ENCODE measurements at regions of chr5 and their contacts with region 1.

Region 1: DNA sequence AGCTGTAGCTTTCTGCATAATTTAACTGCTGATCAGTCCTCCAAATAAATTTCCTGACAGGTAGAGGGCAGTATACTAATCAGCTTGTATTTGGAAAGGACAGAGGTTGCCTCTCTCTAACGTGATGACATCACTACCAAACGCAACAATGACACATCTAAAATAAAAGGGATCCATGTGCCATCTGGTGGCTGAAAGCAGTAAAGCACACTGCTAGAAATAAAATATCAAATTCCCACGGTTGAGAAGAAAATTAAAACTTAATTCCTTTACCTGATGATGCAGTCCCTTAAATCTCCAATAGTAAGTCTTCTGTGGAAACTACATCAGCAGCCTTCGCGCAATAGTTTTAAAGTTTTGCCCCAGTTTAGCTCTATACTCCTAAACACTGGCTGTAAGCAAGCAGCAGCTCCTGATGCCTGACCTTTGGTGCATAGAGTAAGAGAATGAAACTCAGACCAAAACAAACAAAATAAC is 54.5 kb downstream of the DIAPH1 start:
- DNase-seq: peak; percentile 48
- ATAC-seq: peak; percentile 56
- H3K4me3 Mint-ChIP-seq: no peak overlapping the region
- H3K27ac Mint-ChIP-seq: peak overlapping the region; percentile 94
- H3K4me1 Mint-ChIP-seq: peaks cover 35% of the 10 kb centered on the region
- H3K27me3 Mint-ChIP-seq: no peaks in the 10 kb centered on the region
- CTCF ChIP-seq: peak; percentile 94

Region 2: GRCh38 chr5:140966293-140967225 is 597.7 kb before region 1 on chr5 and contains the start of gene PCDHAC2:
- CTCF ChIA-PET with region 1: no interaction called
- POLR2A ChIA-PET with region 1: no interaction called
- DNase-seq: peak; percentile 78
- ATAC-seq: peak; percentile 77
- H3K4me3 Mint-ChIP-seq: peak within 1 kb of the TSS; percentile 92
- H3K27ac Mint-ChIP-seq: peak within 1 kb of the TSS; percentile 51; the same call in 1 of the 2 replicates
- H3K4me1 Mint-ChIP-seq: peaks cover 50% of the 10 kb centered on the region
- H3K27me3 Mint-ChIP-seq: peaks cover 21% of the 10 kb centered on the region
- CTCF ChIP-seq: no peak
- total RNA-seq, gene PCDHAC2: 6.7 to 11.3 TPM (median 7.9 TPM) in 3 replicates

Region 3: DNA sequence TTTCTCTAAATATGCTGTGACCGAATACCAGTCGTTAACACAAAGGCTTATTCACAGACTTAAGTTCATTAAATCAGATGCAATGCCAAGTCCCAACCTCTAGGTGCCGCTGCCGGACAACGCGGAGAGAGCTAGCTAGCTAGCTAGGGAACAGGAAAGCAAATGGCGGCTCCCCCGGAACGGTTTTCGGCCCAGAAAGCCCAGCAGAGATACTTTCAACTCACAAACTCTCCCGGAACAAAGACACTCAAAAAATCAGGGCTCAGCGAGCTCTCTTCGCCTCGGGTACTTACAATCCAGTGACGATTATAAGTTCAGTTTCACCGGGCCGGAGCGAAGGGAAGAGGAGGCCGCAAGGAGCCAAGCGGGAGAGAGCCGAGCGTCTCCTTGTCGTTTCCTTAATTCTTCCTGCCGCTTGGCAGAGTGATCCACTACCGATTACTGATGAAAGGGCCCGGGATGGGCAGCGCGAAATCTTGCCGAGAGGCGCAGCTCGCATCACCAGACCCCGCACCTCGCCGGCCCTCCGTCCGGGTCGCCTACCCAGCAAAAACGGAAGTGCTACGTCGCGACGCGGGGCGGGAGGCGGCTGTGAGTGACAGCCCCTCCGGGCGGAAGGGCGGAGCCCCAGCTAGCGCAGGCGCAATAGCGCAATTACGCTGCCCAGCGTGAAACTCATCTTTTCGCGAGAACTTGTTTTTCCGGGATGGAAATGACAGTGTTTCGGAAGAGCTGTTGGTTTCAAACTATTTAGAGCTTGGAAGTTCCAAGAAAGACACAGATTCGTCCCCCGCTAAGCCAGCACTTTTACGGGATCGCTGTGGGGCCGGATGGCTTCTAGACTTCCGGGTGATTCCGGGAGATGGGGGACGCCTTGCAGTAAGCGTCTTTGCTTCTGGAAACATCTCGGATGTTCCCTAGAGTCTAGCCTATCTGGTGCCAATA is 243.8 kb before region 1 on chr5 and contains the start of gene TAF7:
- CTCF ChIA-PET with region 1: interaction called, 15 read pairs
- POLR2A ChIA-PET with region 1: no interaction called
- DNase-seq: peak; percentile 95
- ATAC-seq: peak; percentile 94
- H3K4me3 Mint-ChIP-seq: peak within 1 kb of the TSS; percentile 99
- H3K27ac Mint-ChIP-seq: peak within 1 kb of the TSS; percentile 99
- H3K4me1 Mint-ChIP-seq: peaks cover 24% of the 10 kb centered on the region
- H3K27me3 Mint-ChIP-seq: peaks cover 24% of the 10 kb centered on the region
- CTCF ChIP-seq: peak; percentile 85
- total RNA-seq, gene TAF7: 87.8 to 96.2 TPM (median 90.1 TPM) in 3 replicates

Region 4: DNA sequence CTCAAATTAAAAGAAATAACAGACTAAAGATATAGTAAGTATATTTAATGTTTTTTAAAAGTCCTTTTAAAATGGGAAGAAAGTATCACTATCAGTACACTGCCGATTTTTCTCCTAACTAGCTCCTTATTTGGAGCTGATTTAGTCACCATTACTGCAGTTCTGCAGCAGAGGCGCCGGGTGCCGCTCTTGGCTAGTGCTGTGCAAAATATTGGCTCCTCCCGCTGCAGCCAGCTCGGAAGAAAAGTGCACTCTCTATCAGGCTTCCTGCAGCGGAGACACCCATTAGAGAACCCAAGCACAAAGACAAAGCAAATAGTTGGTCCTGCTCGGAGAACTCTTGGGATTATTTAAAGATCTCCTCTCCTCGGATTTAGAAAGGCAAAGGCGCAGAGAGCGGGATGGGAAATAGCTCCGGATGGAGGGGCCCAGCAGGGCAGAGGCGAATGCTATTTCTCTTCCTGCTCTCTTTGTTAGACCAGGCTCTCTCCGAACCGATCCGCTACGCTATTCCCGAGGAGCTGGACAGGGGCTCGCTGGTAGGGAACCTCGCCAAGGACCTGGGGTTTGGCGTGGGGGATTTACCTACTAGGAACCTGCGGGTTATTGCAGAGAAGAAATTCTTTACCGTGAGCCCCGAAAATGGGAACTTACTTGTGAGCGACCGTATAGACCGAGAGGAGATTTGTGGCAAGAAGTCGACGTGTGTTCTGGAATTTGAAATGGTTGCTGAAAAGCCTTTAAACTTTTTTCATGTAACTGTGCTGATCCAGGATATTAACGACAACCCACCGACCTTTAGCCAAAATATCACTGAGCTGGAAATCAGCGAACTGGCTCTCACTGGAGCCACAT is 194.0 kb before region 1 on chr5 and contains the start of gene PCDHGB3:
- CTCF ChIA-PET with region 1: interaction called, 23 read pairs
- POLR2A ChIA-PET with region 1: no interaction called
- DNase-seq: peak; percentile 56
- ATAC-seq: peak; percentile 95
- H3K4me3 Mint-ChIP-seq: peak within 1 kb of the TSS; percentile 61
- H3K27ac Mint-ChIP-seq: peak within 1 kb of the TSS; percentile 91
- H3K4me1 Mint-ChIP-seq: peaks cover 5% of the 10 kb centered on the region
- H3K27me3 Mint-ChIP-seq: peaks cover 8% of the 10 kb centered on the region
- CTCF ChIP-seq: no peak
- total RNA-seq, gene PCDHGB3: 3.3 to 4.2 TPM (median 3.5 TPM) in 3 replicates

Region 5: DNA sequence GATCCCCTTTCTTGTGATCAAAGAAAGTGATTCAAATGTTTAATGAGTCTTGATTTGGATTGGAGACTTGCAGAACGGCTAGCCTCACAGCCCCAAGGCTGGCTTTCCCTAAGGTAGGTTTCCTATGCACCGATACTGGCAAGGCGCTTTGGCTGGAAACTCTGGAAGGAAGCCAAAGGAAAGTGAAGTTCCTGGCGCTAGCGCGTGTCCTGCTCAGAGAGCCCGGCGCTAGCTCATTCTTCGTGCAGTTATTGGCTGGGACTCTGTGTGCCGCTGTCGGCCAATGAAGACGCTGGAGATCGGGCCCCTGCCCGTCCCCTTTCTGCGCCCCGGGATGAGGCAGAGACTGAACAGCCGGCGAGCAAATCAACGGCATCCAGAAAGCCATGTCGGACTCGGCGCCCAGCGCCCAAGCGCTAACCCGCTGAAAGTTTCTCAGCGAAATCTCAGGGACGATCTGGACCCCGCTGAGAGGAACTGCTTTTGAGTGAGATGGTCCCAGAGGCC is 88.6 kb before region 1 on chr5 and contains the start of gene PCDHGC3:
- CTCF ChIA-PET with region 1: interaction called, 19 read pairs
- POLR2A ChIA-PET with region 1: no interaction called
- DNase-seq: peak; percentile 92
- ATAC-seq: peak; percentile 96
- H3K4me3 Mint-ChIP-seq: peak within 1 kb of the TSS; percentile 92
- H3K27ac Mint-ChIP-seq: peak within 1 kb of the TSS; percentile 93
- H3K4me1 Mint-ChIP-seq: peaks cover 35% of the 10 kb centered on the region
- H3K27me3 Mint-ChIP-seq: peaks cover 28% of the 10 kb centered on the region
- CTCF ChIP-seq: no peak
- total RNA-seq, gene PCDHGC3: 28.1 to 29.4 TPM (median 29.1 TPM) in 3 replicates

Region 6: GRCh38 chr5:141524604-141525597 is 39.4 kb before region 1 on chr5:
- CTCF ChIA-PET with region 1: interaction called, 31 read pairs
- POLR2A ChIA-PET with region 1: no interaction called
- DNase-seq: peak; percentile 93
- ATAC-seq: peak; percentile 98
- H3K4me3 Mint-ChIP-seq: no peak overlapping the region
- H3K27ac Mint-ChIP-seq: peak overlapping the region; percentile 87
- H3K4me1 Mint-ChIP-seq: peaks cover 23% of the 10 kb centered on the region
- H3K27me3 Mint-ChIP-seq: no peaks in the 10 kb centered on the region
- CTCF ChIP-seq: peak; percentile 97

Measured in WTC11 (cell line).